Kidney (tissue), 22 donors: ENCODE measurements at regions of chr14 and their contacts with region 1.

Region 1: DNA sequence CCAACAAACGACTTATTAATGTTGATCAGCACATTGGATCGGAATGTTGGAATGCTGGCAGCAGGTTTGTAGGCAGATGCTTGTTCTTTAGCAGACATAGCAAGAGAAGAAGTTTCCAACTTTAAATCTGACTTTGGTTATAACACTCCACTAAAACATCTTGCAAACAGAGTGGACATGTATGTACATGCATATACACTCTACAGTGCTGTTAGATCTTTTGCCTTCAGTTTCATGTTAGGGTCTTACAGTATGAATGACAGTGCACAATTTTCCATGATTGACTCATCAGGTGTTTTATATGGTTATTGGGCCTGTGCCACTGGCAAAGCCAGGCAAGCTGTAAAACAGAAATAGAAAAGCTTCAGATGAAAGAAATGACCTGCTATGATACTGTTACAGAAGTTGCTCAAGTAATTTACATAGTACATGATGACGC is 14.3 kb upstream of the DHRS7 start:
- DNase-seq: no peak
- H3K4me3 ChIP-seq: no peak overlapping the region
- H3K27ac ChIP-seq: no peak overlapping the region
- H3K4me1 ChIP-seq: no peaks in the 10 kb centered on the region
- H3K27me3 ChIP-seq: no peaks in the 10 kb centered on the region
- CTCF ChIP-seq: no peak

Region 2: GRCh38 chr14:59897761-59898383 is 281.6 kb before region 1 on chr14:
- intact Hi-C with region 1: no loop called
- DNase-seq: peak in 4 of 5 donors; percentile 29 to 54 (median 44)
- H3K4me3 ChIP-seq: no peak overlapping the region
- H3K27ac ChIP-seq: no peak overlapping the region
- H3K4me1 ChIP-seq: no peaks in the 10 kb centered on the region
- H3K27me3 ChIP-seq: no peaks in the 10 kb centered on the region
- CTCF ChIP-seq: peak; percentile 38

Region 3: GRCh38 chr14:60064491-60065072 is 114.9 kb before region 1 on chr14:
- intact Hi-C with region 1: loop called (anchors 10 kb)
- DNase-seq: peak in 2 of 5 donors; percentile 26 to 50
- H3K4me3 ChIP-seq: no peak overlapping the region
- H3K27ac ChIP-seq: no peak overlapping the region
- H3K4me1 ChIP-seq: no peaks in the 10 kb centered on the region
- H3K27me3 ChIP-seq: no peaks in the 10 kb centered on the region
- CTCF ChIP-seq: peak; percentile 52